Mammary epithelial cell (primary cell): ENCODE measurements at regions of chr4 and their contacts with region 1.

Region 1: GRCh38 chr4:113106108-113106507 is 56.7 kb downstream of the ANK2 start:
- DNase-seq: peak; percentile 10
- H3K4me3 ChIP-seq: no peak overlapping the region
- H3K27ac ChIP-seq: no peak overlapping the region
- H3K4me1 ChIP-seq: no peaks in the 10 kb centered on the region
- H3K27me3 ChIP-seq: peaks cover 2% of the 10 kb centered on the region
- CTCF ChIP-seq: peak; percentile 33 to 52

Region 2: DNA sequence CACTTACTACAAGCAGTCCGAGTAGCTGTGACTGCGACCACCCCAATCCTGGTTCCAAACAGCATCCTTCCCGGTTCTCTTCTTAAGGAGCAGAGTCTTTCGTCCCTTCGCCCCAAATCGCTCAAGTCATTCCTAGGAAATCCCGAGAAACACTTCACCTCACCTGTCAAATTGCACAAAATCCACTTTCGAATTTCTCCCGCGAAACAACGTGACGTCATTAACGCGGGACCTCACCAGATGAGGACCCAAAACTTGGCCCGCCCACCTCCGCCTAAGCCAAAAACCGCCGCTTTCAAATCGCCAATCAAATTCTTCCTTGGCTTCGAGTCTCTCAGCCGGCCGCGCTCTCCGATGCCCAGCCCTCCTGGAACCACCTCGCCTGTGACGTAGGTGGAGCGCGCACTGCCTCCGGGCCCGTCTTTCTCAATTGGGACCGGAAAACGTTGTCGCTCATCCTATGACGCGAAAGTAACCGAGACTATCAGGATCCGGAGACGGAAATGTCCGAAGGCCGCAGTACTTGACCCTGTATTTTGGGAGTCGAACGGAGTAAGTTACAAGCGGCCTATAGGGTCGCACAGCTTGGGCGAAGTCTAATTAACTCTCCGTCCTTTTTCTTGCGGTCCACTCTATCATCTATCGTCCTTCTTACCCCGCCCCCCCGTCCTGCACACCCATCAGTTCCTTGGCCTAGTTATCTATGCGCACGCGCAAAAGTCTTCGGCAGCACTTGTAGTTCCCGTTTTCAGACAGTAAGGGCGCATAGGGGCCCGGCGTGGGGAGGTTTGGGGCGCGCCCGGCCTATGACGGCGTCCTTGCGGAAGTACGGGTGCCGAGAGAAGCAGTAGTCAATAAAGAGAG is 469.2 kb before region 1 on chr4 and contains the starts of genes LARP7 and ZGRF1:
- CTCF ChIA-PET with region 1: no interaction called
- dilution Hi-C with region 1: no loop called
- in situ Hi-C with region 1: no loop called
- intact Hi-C with region 1: no loop called
- DNase-seq: peak; percentile 99
- H3K4me3 ChIP-seq: peak within 1 kb of the TSS; percentile 82 to 99 (median 97)
- H3K27ac ChIP-seq: peak within 1 kb of the TSS; percentile 91
- H3K4me1 ChIP-seq: peaks cover 8% of the 10 kb centered on the region
- H3K27me3 ChIP-seq: no peaks in the 10 kb centered on the region
- CTCF ChIP-seq: peak; percentile 77 to 93
- total RNA-seq, gene LARP7: 16.8 to 34.9 TPM
- total RNA-seq, gene ZGRF1: 3.3 to 10.3 TPM

Region 3: GRCh38 chr4:113153529-113154101 is 47.5 kb after region 1 on chr4:
- CTCF ChIA-PET with region 1: no interaction called
- dilution Hi-C with region 1: no loop called
- in situ Hi-C with region 1: no loop called
- intact Hi-C with region 1: loop called (anchors 1 kb)
- DNase-seq: peak; percentile 12
- H3K4me3 ChIP-seq: no peak overlapping the region
- H3K27ac ChIP-seq: no peak overlapping the region
- H3K4me1 ChIP-seq: no peaks in the 10 kb centered on the region
- H3K27me3 ChIP-seq: no peaks in the 10 kb centered on the region
- CTCF ChIP-seq: no peak

Region 4: GRCh38 chr4:113278324-113278934 is 172.3 kb after region 1 on chr4:
- CTCF ChIA-PET with region 1: no interaction called
- dilution Hi-C with region 1: no loop called
- in situ Hi-C with region 1: no loop called
- intact Hi-C with region 1: loop called (anchors 10 kb)
- DNase-seq: peak; percentile 55
- H3K4me3 ChIP-seq: no peak overlapping the region
- H3K27ac ChIP-seq: no peak overlapping the region
- H3K4me1 ChIP-seq: no peaks in the 10 kb centered on the region
- H3K27me3 ChIP-seq: no peaks in the 10 kb centered on the region
- CTCF ChIP-seq: peak; percentile 85 to 88

Region 5: DNA sequence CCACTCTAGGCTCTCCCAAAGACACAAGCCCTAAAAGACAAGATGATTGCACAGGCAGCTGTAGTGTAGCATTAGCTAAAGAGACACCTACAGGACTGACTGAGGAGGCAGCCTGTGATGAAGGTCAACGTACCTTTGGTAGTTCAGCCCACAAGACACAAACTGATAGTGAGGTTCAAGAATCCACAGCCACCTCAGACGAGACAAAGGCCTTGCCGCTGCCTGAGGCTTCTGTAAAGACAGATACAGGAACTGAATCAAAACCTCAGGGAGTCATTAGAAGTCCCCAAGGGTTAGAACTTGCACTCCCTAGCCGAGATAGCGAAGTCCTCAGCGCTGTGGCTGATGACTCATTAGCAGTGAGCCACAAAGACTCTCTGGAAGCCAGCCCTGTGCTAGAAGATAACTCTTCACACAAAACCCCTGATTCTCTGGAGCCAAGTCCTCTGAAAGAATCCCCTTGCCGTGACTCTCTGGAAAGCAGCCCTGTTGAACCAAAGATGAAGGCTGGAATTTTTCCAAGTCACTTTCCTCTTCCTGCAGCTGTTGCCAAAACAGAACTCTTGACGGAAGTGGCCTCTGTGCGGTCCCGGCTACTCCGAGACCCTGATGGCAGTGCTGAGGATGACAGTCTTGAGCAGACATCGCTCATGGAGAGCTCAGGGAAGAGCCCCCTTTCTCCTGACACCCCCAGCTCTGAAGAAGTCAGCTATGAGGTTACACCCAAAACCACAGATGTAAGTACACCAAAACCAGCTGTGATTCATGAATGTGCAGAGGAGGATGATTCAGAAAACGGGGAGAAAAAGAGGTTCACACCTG is 249.7 kb after region 1 on chr4:
- CTCF ChIA-PET with region 1: no interaction called
- dilution Hi-C with region 1: no loop called
- in situ Hi-C with region 1: no loop called
- intact Hi-C with region 1: no loop called
- DNase-seq: peak; percentile 95
- H3K4me3 ChIP-seq: no peak overlapping the region
- H3K27ac ChIP-seq: peak overlapping the region; percentile 81
- H3K4me1 ChIP-seq: peaks cover 17% of the 10 kb centered on the region
- H3K27me3 ChIP-seq: peaks cover 25% of the 10 kb centered on the region
- CTCF ChIP-seq: peak; percentile 12 to 44